ENCODE measurements at regions of chr10 and their contacts with region 1.

Region 1: DNA sequence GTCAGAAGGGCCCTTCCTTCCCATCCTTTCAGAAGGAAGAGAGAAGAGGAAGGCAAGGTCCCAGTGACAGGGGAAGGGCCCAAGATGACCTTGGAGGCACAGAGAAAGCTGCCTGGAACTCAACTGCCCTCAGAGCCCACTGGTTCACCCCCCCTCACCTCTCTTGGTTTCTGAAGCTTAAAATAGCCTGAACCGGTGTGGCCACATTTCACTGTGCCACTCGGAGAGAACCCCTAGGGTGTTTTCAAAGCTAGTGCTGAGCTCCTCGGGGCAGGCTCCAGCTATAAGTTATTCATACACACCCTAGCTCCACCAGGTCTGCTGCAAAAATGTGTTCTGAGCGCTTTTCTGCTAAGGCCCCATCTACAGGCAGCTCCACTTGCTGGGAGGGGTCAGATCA is 60.9 kb upstream of the ADRB1 start:
- DNase-seq: peak; percentile 54 to 70
- H3K4me3 ChIP-seq: no peak overlapping the region
- H3K27ac ChIP-seq: peak overlapping the region; percentile 75 to 80
- H3K4me1 ChIP-seq: peaks cover 0 to 5% of the 10 kb centered on the region in 2 donors
- H3K27me3 ChIP-seq: no peaks in the 10 kb centered on the region
- CTCF ChIP-seq: peak in 1 of 3 donors; percentile 10
- POLR2A ChIP-seq: no peak

Region 2: DNA sequence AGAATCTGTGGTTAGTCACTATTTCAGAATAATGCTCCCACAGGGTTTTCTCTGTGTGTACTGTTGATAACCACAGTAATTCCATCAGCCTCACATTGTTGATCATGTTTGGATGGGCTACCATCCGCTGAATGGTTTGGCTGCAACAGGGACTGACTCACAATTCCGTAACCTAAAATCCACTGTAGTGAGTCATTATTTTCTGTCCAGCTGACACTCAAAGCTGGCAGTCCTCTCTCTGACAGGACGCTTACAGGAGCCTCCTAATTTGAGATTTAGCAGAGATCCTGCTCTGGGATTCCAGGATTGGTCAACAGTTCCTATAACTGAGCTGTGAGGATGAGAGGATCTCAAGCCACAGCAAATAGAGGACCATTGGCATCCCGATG is 289.0 kb after region 1 on chr10:
- intact Hi-C with region 1: no loop called
- DNase-seq: peak; percentile 39 to 44
- H3K4me3 ChIP-seq: no peak overlapping the region
- H3K27ac ChIP-seq: peak overlapping the region; percentile 6 to 27
- H3K4me1 ChIP-seq: no peaks in the 10 kb centered on the region
- H3K27me3 ChIP-seq: no peaks in the 10 kb centered on the region
- CTCF ChIP-seq: no peak
- POLR2A ChIP-seq: no peak

Region 3: GRCh38 chr10:115638246-115638645 is 1655.5 kb after region 1 on chr10:
- intact Hi-C with region 1: loop called (anchors 10 kb)
- DNase-seq: no peak
- H3K4me3 ChIP-seq: no peak overlapping the region
- H3K27ac ChIP-seq: no peak overlapping the region
- H3K4me1 ChIP-seq: no peaks in the 10 kb centered on the region
- H3K27me3 ChIP-seq: no peaks in the 10 kb centered on the region
- CTCF ChIP-seq: no peak
- POLR2A ChIP-seq: no peak

Measured in breast epithelium (tissue), 4 donors.